Natural killer cell (primary cell): ENCODE measurements at regions of chr9 and their contacts with region 1.

Region 1: GRCh38 chr9:72271613-72272478 is 93.2 kb downstream of the ZFAND5 start:
- DNase-seq: peak in 1 of 2 donors; percentile 73
- ATAC-seq: peak; percentile 66 to 79 (median 67)
- H3K4me3 ChIP-seq: no peak overlapping the region
- H3K4me3 Mint-ChIP-seq: no peak overlapping the region
- H3K27ac ChIP-seq: no peak overlapping the region
- H3K27ac Mint-ChIP-seq: no peak overlapping the region
- H3K4me1 ChIP-seq: no peaks in the 10 kb centered on the region
- H3K4me1 Mint-ChIP-seq: no peaks in the 10 kb centered on the region
- H3K27me3 ChIP-seq: no peaks in the 10 kb centered on the region
- H3K27me3 Mint-ChIP-seq: peaks cover 5 to 10% of the 10 kb centered on the region in 2 donors
- CTCF ChIP-seq: peak; percentile 89

Region 2: GRCh38 chr9:71285191-71285656 is 986.6 kb before region 1 on chr9:
- intact Hi-C with region 1: loop called (anchors 10 kb)
- DNase-seq: peak in 1 of 2 donors; percentile 59
- ATAC-seq: peak; percentile 53 to 78 (median 57)
- H3K4me3 ChIP-seq: no peak overlapping the region
- H3K4me3 Mint-ChIP-seq: no peak overlapping the region
- H3K27ac ChIP-seq: no peak overlapping the region
- H3K27ac Mint-ChIP-seq: no peak overlapping the region
- H3K4me1 ChIP-seq: no peaks in the 10 kb centered on the region
- H3K4me1 Mint-ChIP-seq: no peaks in the 10 kb centered on the region
- H3K27me3 ChIP-seq: no peaks in the 10 kb centered on the region
- H3K27me3 Mint-ChIP-seq: peaks cover 0 to 3% of the 10 kb centered on the region in 2 donors
- CTCF ChIP-seq: peak; percentile 70

Region 3: DNA sequence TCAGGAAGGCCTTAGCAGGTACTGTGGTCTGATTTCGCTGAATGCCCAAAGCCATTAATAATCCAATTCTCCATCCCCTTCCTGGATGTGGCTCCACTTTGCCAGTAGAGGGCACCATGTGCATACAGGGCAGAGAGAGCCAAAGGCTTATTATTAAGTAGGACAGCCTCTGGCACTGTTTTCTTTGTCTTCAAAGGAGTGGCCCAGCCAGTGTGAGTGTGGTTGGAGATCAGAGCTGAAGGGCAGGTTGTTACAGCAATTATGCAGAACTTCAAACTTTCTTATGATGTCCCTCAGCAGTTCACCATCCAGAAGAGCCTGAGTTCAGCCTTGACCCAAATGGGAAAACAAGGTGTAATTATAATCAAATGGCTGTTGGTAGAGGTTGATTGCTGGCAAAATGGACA is 464.9 kb before region 1 on chr9:
- intact Hi-C with region 1: loop called (anchors 2 kb)
- DNase-seq: peak; percentile 31 to 81
- ATAC-seq: peak; percentile 90 to 99 (median 98)
- H3K4me3 ChIP-seq: no peak overlapping the region
- H3K4me3 Mint-ChIP-seq: no peak overlapping the region
- H3K27ac ChIP-seq: no peak overlapping the region
- H3K27ac Mint-ChIP-seq: peak overlapping the region; percentile 39 to 65
- H3K4me1 ChIP-seq: no peaks in the 10 kb centered on the region
- H3K4me1 Mint-ChIP-seq: peaks cover 6 to 7% of the 10 kb centered on the region in 2 donors
- H3K27me3 ChIP-seq: no peaks in the 10 kb centered on the region
- H3K27me3 Mint-ChIP-seq: no peaks in the 10 kb centered on the region
- CTCF ChIP-seq: peak; percentile 79

Region 4: GRCh38 chr9:72038890-72039410 is 232.9 kb before region 1 on chr9:
- intact Hi-C with region 1: loop called (anchors 1 kb)
- DNase-seq: peak; percentile 42 to 79
- ATAC-seq: peak; percentile 64 to 88 (median 73)
- H3K4me3 ChIP-seq: no peak overlapping the region
- H3K4me3 Mint-ChIP-seq: no peak overlapping the region
- H3K27ac ChIP-seq: no peak overlapping the region
- H3K27ac Mint-ChIP-seq: no peak overlapping the region
- H3K4me1 ChIP-seq: peaks cover 3% of the 10 kb centered on the region
- H3K4me1 Mint-ChIP-seq: peaks cover 6% of the 10 kb centered on the region in 2 donors
- H3K27me3 ChIP-seq: no peaks in the 10 kb centered on the region
- H3K27me3 Mint-ChIP-seq: peaks cover 19 to 20% of the 10 kb centered on the region in 2 donors
- CTCF ChIP-seq: peak; percentile 95